ENCODE measurements at regions of chr2 and their contacts with region 1.

Region 1: DNA sequence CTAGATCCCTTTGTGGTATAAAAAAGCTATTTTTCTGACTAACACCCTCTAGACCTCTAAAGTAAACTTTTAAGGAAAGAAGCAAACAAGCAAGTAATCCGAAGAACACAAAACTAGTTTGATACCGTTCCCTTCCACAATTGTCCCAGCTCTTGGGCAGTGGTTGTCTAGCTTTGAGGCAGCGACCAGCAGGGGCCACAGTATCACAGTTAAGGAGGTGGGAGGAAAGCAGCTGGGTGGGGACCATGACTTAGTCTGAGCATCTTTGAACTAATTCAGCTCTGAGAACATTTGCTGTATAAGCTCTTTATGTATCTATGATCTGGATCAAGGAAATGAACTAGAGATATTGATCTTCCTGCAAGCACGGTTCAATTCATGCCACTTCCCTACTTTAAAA is 51.0 kb downstream of the SF3B1 start:
- DNase-seq: no peak
- H3K4me3 ChIP-seq: no peak overlapping the region
- H3K27ac ChIP-seq: no peak overlapping the region
- H3K4me1 ChIP-seq: no peaks in the 10 kb centered on the region
- H3K27me3 ChIP-seq: no peaks in the 10 kb centered on the region
- CTCF ChIP-seq: no peak

Region 2: GRCh38 chr2:197184959-197185586 is 198.8 kb before region 1 on chr2:
- intact Hi-C with region 1: loop called (anchors 10 kb)
- DNase-seq: peak in 2 of 5 donors; percentile 35 to 89
- H3K4me3 ChIP-seq: no peak overlapping the region
- H3K27ac ChIP-seq: peak overlapping the region in 1 of 2 donors; percentile 7
- H3K4me1 ChIP-seq: peaks cover 0 to 8% (median 5%) of the 10 kb centered on the region in 3 donors
- H3K27me3 ChIP-seq: no peaks in the 10 kb centered on the region
- CTCF ChIP-seq: no peak

Region 3: GRCh38 chr2:197327472-197328098 is 56.2 kb before region 1 on chr2:
- intact Hi-C with region 1: no loop called
- DNase-seq: peak in 1 of 5 donors; percentile 34
- H3K4me3 ChIP-seq: no peak overlapping the region
- H3K27ac ChIP-seq: no peak overlapping the region
- H3K4me1 ChIP-seq: peaks cover 0 to 5% (median 4%) of the 10 kb centered on the region in 3 donors
- H3K27me3 ChIP-seq: no peaks in the 10 kb centered on the region
- CTCF ChIP-seq: no peak